ENCODE measurements at regions of chr10 and their contacts with region 1.

Region 1: GRCh38 chr10:71343392-71343773 is 24.3 kb downstream of the SLC29A3 start:
- DNase-seq: peak in 2 of 4 experiments; percentile 33 to 49
- ATAC-seq: peak; percentile 9
- H3K4me3 ChIP-seq: no peak overlapping the region
- H3K27ac ChIP-seq: no peak overlapping the region
- H3K4me1 ChIP-seq: peaks cover 36 to 37% of the 10 kb centered on the region in 2 experiments
- H3K27me3 ChIP-seq: no peaks in the 10 kb centered on the region
- CTCF ChIP-seq: no peak
- EP300 ChIP-seq: no peak
- POLR2A ChIP-seq: no peak
- RAD21 ChIP-seq: no peak

Region 2: DNA sequence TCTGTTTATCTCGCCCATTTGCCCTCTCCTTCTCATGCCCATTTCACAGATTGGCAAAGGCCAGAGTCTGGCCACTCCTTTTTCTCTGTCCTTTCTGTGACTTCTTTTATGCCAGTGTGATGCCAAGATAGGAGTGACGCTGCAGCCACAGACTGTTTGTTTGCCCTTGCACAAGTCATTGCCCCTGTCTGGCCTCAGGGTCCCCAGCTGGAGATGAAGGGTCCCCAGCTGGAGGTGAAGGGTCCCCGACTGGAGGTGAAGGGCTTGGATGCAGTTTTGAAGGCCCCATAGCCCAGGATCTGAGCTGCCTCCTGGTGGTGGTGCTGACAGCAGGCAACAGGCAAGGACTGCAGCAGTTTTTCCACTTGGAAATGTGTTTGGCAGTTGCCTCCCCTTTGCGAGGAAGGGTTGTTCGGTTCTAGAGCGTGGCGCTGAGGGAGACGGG is 75.1 kb before region 1 on chr10:
- CTCF ChIA-PET with region 1: no interaction called
- POLR2A ChIA-PET with region 1: no interaction called
- in situ Hi-C with region 1: no loop called
- intact Hi-C with region 1: no loop called
- DNase-seq: peak in 3 of 4 experiments; percentile 36 to 44 (median 38)
- ATAC-seq: peak; percentile 14
- H3K4me3 ChIP-seq: no peak overlapping the region
- H3K27ac ChIP-seq: no peak overlapping the region
- H3K4me1 ChIP-seq: peaks cover 34 to 54% of the 10 kb centered on the region in 2 experiments
- H3K27me3 ChIP-seq: no peaks in the 10 kb centered on the region; a peak in 1 of 5 replicates
- CTCF ChIP-seq: peak; percentile 65 to 78 (median 77)
- EP300 ChIP-seq: no peak
- POLR2A ChIP-seq: no peak
- RAD21 ChIP-seq: peak; percentile 68 to 81

Region 3: GRCh38 chr10:71359364-71360046 is 16.1 kb after region 1 on chr10:
- CTCF ChIA-PET with region 1: no interaction called
- POLR2A ChIA-PET with region 1: interaction called, 11 read pairs
- in situ Hi-C with region 1: no loop called
- intact Hi-C with region 1: no loop called
- DNase-seq: peak; percentile 89 to 95 (median 90)
- ATAC-seq: peak; percentile 86
- H3K4me3 ChIP-seq: no peak overlapping the region
- H3K27ac ChIP-seq: peak overlapping the region; percentile 74
- H3K4me1 ChIP-seq: peaks cover 24 to 26% of the 10 kb centered on the region in 2 experiments
- H3K27me3 ChIP-seq: no peaks in the 10 kb centered on the region
- CTCF ChIP-seq: no peak
- EP300 ChIP-seq: peak; percentile 76; the same call in 1 of the 2 replicates
- POLR2A ChIP-seq: no peak; the same call in 1 of the 2 replicates
- RAD21 ChIP-seq: no peak

Region 4: GRCh38 chr10:71671994-71672946 is 328.9 kb after region 1 on chr10:
- CTCF ChIA-PET with region 1: no interaction called
- POLR2A ChIA-PET with region 1: no interaction called
- in situ Hi-C with region 1: no loop called
- intact Hi-C with region 1: no loop called
- DNase-seq: peak; percentile 41 to 73 (median 58)
- ATAC-seq: peak; percentile 48
- H3K4me3 ChIP-seq: no peak overlapping the region
- H3K27ac ChIP-seq: no peak overlapping the region
- H3K4me1 ChIP-seq: peaks cover 0 to 21% of the 10 kb centered on the region in 2 experiments; a peak in 3 of 5 replicates
- H3K27me3 ChIP-seq: no peaks in the 10 kb centered on the region
- CTCF ChIP-seq: no peak
- EP300 ChIP-seq: no peak
- POLR2A ChIP-seq: no peak
- RAD21 ChIP-seq: no peak

Measured in K562 (cell line).